ENCODE measurements at regions of chr2 and their contacts with region 1.

Region 1: GRCh38 chr2:45643543-45644542 is 7.6 kb upstream of the PRKCE start:
- DNase-seq: peak; percentile 83
- ATAC-seq: peak; percentile 99
- H3K4me3 Mint-ChIP-seq: peak overlapping the region; percentile 77
- H3K27ac Mint-ChIP-seq: no peak overlapping the region
- H3K4me1 Mint-ChIP-seq: peaks cover 14% of the 10 kb centered on the region
- H3K27me3 Mint-ChIP-seq: peaks cover 5% of the 10 kb centered on the region
- CTCF ChIP-seq: peak; percentile 95

Region 2: DNA sequence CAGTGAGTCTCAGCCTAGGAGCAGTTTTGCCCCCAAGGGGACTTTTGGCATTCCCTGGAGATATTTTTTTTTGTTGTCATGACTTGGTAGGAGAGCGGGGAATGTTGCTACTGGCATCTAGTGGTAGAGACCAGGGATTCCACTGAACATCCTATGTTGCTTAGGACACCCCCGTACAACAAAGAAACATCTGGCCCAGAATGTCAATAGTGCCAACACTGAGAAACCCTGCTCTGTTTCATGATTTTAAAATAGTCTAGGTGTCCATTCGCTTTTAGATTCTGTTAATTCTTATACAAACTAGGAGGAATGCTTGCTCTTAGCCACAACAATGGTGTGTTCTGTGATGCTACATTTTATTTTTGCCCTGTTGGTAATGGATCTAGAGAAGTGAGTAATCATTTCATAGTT is 928.2 kb before region 1 on chr2:
- CTCF ChIA-PET with region 1: no interaction called
- POLR2A ChIA-PET with region 1: no interaction called
- intact Hi-C with region 1: no loop called
- DNase-seq: no peak
- ATAC-seq: no peak
- H3K4me3 Mint-ChIP-seq: no peak overlapping the region
- H3K27ac Mint-ChIP-seq: peak overlapping the region; percentile 46
- H3K4me1 Mint-ChIP-seq: peaks cover 47% of the 10 kb centered on the region
- H3K27me3 Mint-ChIP-seq: no peaks in the 10 kb centered on the region
- CTCF ChIP-seq: no peak

Region 3: DNA sequence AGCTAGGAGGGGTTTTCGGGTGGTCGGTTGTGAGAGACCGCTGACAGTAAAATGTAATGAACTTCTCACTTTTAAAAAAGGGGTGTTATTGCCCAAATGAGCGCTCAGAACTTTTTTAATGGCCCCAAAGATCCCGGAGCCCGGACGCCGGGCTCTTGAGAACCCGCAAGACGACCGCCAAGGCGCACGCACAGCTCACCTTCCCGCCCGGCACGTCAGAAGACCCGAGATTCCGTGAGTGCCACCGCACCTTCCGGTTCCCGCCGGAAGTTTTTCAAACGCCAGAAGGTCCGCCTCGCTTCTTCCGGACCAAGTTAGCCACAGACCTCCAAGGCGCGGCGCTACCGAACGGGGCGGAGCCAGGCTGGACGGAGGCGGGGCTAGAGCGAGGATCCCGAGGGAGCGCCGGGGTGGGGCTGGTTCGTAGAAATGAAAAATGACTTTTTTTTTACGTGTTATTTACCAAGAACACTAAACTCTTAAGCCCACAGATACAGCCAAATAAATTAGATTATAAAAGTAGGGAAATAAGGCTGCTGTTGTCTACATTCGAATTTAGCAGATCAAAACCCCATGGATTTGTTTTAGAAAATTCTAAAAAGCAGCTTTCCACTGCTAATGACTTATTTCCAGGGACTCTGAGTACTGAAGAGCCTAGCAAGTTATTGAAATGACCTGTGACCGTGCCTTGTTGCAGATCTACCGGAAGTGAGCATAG is 32.7 kb before region 1 on chr2 and contains the start of gene SRBD1:
- CTCF ChIA-PET with region 1: no interaction called
- POLR2A ChIA-PET with region 1: interaction called, 5 read pairs
- intact Hi-C with region 1: loop called (anchors 2 kb)
- DNase-seq: peak; percentile 94
- ATAC-seq: peak; percentile 98
- H3K4me3 Mint-ChIP-seq: peak within 1 kb of the TSS; percentile 96
- H3K27ac Mint-ChIP-seq: peak within 1 kb of the TSS; percentile 95
- H3K4me1 Mint-ChIP-seq: peaks cover 29% of the 10 kb centered on the region
- H3K27me3 Mint-ChIP-seq: no peaks in the 10 kb centered on the region
- CTCF ChIP-seq: no peak
- total RNA-seq, gene SRBD1: 20.2 and 20.8 TPM in 2 replicates

Region 4: GRCh38 chr2:45627911-45628310 is 15.9 kb before region 1 on chr2:
- CTCF ChIA-PET with region 1: no interaction called
- POLR2A ChIA-PET with region 1: no interaction called
- intact Hi-C with region 1: no loop called
- DNase-seq: no peak
- ATAC-seq: no peak
- H3K4me3 Mint-ChIP-seq: no peak overlapping the region
- H3K27ac Mint-ChIP-seq: no peak overlapping the region
- H3K4me1 Mint-ChIP-seq: no peaks in the 10 kb centered on the region
- H3K27me3 Mint-ChIP-seq: peaks cover 33% of the 10 kb centered on the region
- CTCF ChIP-seq: no peak

Region 5: GRCh38 chr2:45669032-45669486 is 25.2 kb after region 1 on chr2:
- CTCF ChIA-PET with region 1: no interaction called
- POLR2A ChIA-PET with region 1: no interaction called
- intact Hi-C with region 1: no loop called
- DNase-seq: no peak
- ATAC-seq: no peak
- H3K4me3 Mint-ChIP-seq: no peak overlapping the region
- H3K27ac Mint-ChIP-seq: no peak overlapping the region
- H3K4me1 Mint-ChIP-seq: peaks cover 35% of the 10 kb centered on the region
- H3K27me3 Mint-ChIP-seq: no peaks in the 10 kb centered on the region
- CTCF ChIP-seq: no peak

Region 6: GRCh38 chr2:45860136-45861121 is 216.6 kb after region 1 on chr2:
- CTCF ChIA-PET with region 1: no interaction called
- POLR2A ChIA-PET with region 1: no interaction called
- intact Hi-C with region 1: no loop called
- DNase-seq: no peak
- ATAC-seq: peak; percentile 52
- H3K4me3 Mint-ChIP-seq: peak overlapping the region; percentile 84
- H3K27ac Mint-ChIP-seq: peak overlapping the region; percentile 81
- H3K4me1 Mint-ChIP-seq: peaks cover 39% of the 10 kb centered on the region
- H3K27me3 Mint-ChIP-seq: no peaks in the 10 kb centered on the region
- CTCF ChIP-seq: no peak

Region 7: GRCh38 chr2:45935791-45936622 is 292.2 kb after region 1 on chr2:
- CTCF ChIA-PET with region 1: interaction called, 23 read pairs
- POLR2A ChIA-PET with region 1: interaction called, 4 read pairs
- intact Hi-C with region 1: loop called (anchors 1 kb)
- DNase-seq: peak; percentile 41
- ATAC-seq: peak; percentile 85
- H3K4me3 Mint-ChIP-seq: no peak overlapping the region
- H3K27ac Mint-ChIP-seq: no peak overlapping the region
- H3K4me1 Mint-ChIP-seq: peaks cover 6% of the 10 kb centered on the region
- H3K27me3 Mint-ChIP-seq: no peaks in the 10 kb centered on the region
- CTCF ChIP-seq: no peak

Region 8: GRCh38 chr2:46062637-46063412 is 419.0 kb after region 1 on chr2:
- CTCF ChIA-PET with region 1: no interaction called
- POLR2A ChIA-PET with region 1: no interaction called
- intact Hi-C with region 1: loop called (anchors 1 kb)
- DNase-seq: peak; percentile 30
- ATAC-seq: peak; percentile 70
- H3K4me3 Mint-ChIP-seq: no peak overlapping the region
- H3K27ac Mint-ChIP-seq: no peak overlapping the region
- H3K4me1 Mint-ChIP-seq: no peaks in the 10 kb centered on the region
- H3K27me3 Mint-ChIP-seq: no peaks in the 10 kb centered on the region
- CTCF ChIP-seq: peak; percentile 59

Region 9: DNA sequence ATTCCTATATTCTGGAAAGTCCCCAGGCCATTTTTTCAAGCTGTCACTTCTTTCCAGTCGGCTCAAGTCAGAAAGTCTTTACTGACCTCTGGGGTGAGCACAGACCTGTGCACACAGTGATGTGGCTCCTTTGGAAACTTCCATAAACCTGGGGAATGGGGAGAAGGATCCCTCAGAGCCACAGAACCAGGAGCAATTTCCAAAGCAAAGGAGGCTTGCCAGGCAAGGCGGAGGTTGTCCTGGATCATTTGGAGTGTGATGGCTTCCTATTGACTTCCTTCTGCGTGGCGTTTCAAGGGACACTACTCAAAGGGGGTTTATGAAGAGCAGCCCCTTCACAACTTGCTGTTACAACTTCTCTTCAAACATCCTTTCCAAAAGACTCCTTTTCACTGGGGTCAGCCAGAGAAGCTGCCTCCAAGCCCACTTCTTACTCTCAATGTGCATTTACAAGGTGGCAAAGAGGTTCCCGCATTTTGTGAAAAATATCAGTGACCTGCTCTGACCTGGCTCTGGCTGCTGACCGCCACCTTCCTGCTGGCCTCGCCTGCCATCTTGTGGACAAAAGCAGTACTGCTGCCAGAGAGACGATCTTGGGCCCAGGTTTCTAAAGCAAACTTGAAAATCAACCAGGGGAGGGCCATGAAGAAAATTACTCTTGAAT is 817.3 kb after region 1 on chr2:
- CTCF ChIA-PET with region 1: no interaction called
- POLR2A ChIA-PET with region 1: no interaction called
- intact Hi-C with region 1: loop called (anchors 2 kb)
- DNase-seq: peak; percentile 71
- ATAC-seq: peak; percentile 80
- H3K4me3 Mint-ChIP-seq: peak overlapping the region; percentile 60
- H3K27ac Mint-ChIP-seq: peak overlapping the region; percentile 81
- H3K4me1 Mint-ChIP-seq: peaks cover 21% of the 10 kb centered on the region
- H3K27me3 Mint-ChIP-seq: no peaks in the 10 kb centered on the region
- CTCF ChIP-seq: peak; percentile 74